Activated naive CD4-positive, alpha-beta T cell treated with anti-CD3 and anti-CD28 coated beads for 36 hours (primary cell): ENCODE measurements at regions of chr7 and their contacts with region 1.

Region 1: DNA sequence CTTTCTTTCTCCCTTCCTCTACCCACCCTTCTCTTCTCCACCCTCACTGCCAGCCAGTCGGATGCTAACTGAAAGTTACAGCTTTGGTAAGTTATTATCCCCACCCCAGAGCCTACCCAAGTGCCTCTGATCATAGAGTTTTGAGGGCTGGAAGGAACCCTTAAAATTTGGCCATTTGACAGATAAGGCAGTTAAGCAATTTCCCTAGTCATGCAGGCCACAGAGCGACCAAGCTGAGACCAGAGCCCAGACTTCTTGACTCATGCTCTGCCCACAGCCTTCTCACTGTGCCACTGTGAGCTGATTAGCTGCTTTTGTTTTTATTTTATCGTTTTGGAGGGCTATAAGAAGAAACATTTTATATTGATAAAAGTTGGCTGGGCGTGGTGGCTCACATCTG is 17.2 kb downstream of the SAP25 start:
- DNase-seq: no peak
- H3K4me3 Mint-ChIP-seq: no peak overlapping the region
- H3K27ac Mint-ChIP-seq: no peak overlapping the region
- H3K4me1 Mint-ChIP-seq: peaks cover 9% of the 10 kb centered on the region
- H3K27me3 Mint-ChIP-seq: no peaks in the 10 kb centered on the region

Region 2: GRCh38 chr7:100469227-100470044 is 87.1 kb before region 1 on chr7:
- CTCF ChIA-PET with region 1: interaction called, 29 read pairs
- intact Hi-C with region 1: loop called (anchors 1 kb)
- DNase-seq: peak; percentile 88
- H3K4me3 Mint-ChIP-seq: no peak overlapping the region
- H3K27ac Mint-ChIP-seq: peak overlapping the region; percentile 13
- H3K4me1 Mint-ChIP-seq: peaks cover 29% of the 10 kb centered on the region
- H3K27me3 Mint-ChIP-seq: no peaks in the 10 kb centered on the region

Region 3: DNA sequence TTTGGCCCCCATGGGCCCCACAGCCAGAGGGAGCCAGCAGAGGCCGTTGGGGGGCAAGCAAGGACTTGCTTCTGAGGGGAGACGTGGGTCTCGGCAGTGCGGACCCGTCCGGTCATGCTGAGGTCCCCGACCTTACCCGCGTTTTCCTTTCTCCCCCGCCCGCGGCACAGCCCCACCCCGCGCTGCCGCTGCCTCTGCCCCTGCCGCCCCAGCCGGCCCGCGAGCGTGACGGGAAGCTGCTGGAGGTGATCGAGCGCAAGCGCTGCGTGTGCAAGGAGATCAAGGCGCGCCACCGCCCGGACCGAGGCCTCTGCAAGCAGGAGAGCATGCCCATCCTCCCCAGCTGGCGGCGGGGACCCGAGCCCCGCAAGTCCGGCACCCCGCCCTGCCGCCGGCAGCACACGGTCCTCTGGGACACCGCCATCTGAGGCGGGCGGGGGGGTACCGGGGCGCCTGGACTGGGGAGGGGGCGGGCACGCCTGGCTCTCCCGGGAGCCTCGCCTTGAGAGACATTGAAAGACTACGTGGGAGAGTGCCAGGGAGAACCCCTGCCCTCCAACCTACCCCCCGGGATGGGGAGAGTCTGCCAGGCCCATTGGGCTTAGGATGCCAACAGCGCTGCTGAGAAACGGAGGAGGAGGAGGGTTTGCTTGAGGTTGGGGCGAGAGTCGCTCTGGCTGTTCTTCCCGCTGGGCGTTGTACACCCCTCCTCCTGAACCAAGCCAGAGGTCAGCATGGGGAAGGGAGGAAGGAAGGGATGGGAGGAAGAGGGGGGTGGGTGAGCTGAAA is 62.9 kb before region 1 on chr7:
- CTCF ChIA-PET with region 1: interaction called, 15 read pairs
- intact Hi-C with region 1: no loop called
- DNase-seq: peak; percentile 77
- H3K4me3 Mint-ChIP-seq: peak overlapping the region; percentile 60
- H3K27ac Mint-ChIP-seq: no peak overlapping the region
- H3K4me1 Mint-ChIP-seq: peaks cover 11% of the 10 kb centered on the region
- H3K27me3 Mint-ChIP-seq: peaks cover 2% of the 10 kb centered on the region

Region 4: GRCh38 chr7:100520138-100520537 is 36.4 kb before region 1 on chr7:
- CTCF ChIA-PET with region 1: interaction called, 14 read pairs
- intact Hi-C with region 1: no loop called
- DNase-seq: no peak
- H3K4me3 Mint-ChIP-seq: no peak overlapping the region
- H3K27ac Mint-ChIP-seq: no peak overlapping the region
- H3K4me1 Mint-ChIP-seq: peaks cover 19% of the 10 kb centered on the region
- H3K27me3 Mint-ChIP-seq: no peaks in the 10 kb centered on the region

Region 5: GRCh38 chr7:100538654-100539435 is 17.7 kb before region 1 on chr7 and contains the start of gene AGFG2:
- CTCF ChIA-PET with region 1: interaction called, 82 read pairs
- intact Hi-C with region 1: no loop called
- DNase-seq: peak; percentile 100
- H3K4me3 Mint-ChIP-seq: peak within 1 kb of the TSS; percentile 97
- H3K27ac Mint-ChIP-seq: peak within 1 kb of the TSS; percentile 91
- H3K4me1 Mint-ChIP-seq: peaks cover 39% of the 10 kb centered on the region
- H3K27me3 Mint-ChIP-seq: no peaks in the 10 kb centered on the region
- total RNA-seq, gene AGFG2: 23.4 to 23.9 TPM

Region 6: DNA sequence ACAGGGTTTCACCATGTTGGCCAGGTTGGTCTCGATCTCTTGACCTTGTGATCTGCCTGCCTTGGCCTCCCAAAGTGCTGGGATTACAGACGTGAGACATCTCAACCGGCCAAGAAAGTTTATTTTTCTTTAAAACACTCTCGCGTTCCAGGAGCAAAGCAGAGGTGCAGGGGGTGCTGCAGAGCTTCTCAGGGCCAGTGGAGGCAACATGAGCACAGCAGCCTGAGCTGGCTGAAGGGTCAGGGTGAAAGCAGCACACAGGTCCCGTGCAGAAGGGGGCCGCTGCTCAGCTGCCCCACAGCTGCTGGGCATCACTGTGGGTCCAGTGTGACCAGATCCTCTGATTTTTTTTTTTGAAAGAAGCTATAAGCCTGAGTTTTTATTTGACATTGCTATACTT is 224.7 kb after region 1 on chr7:
- CTCF ChIA-PET with region 1: no interaction called
- intact Hi-C with region 1: no loop called
- DNase-seq: no peak
- H3K4me3 Mint-ChIP-seq: no peak overlapping the region
- H3K27ac Mint-ChIP-seq: no peak overlapping the region
- H3K4me1 Mint-ChIP-seq: peaks cover 2% of the 10 kb centered on the region
- H3K27me3 Mint-ChIP-seq: peaks cover 6% of the 10 kb centered on the region